CD4-positive, alpha-beta memory T cell (primary cell): ENCODE measurements at regions of chr14 and their contacts with region 1.

Region 1: DNA sequence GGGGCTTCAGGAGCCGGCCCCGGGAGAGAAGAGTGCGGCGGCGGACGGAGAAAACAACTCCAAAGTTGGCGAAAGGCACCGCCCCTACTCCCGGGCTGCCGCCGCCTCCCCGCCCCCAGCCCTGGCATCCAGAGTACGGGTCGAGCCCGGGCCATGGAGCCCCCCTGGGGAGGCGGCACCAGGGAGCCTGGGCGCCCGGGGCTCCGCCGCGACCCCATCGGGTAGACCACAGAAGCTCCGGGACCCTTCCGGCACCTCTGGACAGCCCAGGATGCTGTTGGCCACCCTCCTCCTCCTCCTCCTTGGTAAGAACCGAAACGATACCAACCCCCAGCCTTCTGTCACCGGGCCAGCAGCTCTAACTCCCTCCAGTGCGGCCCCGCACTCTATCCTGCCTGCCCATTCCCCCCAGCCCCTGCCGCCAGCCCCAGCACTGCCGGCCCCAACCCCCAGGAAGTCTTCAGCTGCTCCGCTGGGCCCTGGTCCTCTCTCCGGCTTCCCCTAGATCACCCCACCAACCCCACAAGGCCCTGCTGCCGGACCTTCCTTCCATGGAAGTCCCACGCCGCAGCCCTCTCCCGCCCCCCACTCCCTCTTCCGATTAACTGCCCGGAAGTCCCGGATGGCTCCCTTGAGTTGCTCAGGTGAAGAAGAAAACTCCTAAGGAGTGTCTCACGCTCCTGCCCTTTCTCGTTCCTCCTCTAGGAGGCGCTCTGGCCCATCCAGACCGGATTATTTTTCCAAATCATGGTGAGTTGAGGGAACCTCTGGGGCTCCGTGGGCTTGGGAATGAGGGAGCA is 693 bp downstream of the LRP10 start:
- DNase-seq: peak; percentile 66 to 78 (median 73)
- H3K4me3 ChIP-seq: peak overlapping the region; percentile 24 to 55
- H3K4me3 Mint-ChIP-seq: peak overlapping the region; percentile 88 to 98 (median 97)
- H3K27ac ChIP-seq: peak overlapping the region; percentile 79
- H3K27ac Mint-ChIP-seq: peak overlapping the region; percentile 72 to 100 (median 89)
- H3K4me1 ChIP-seq: peaks cover 48% of the 10 kb centered on the region
- H3K4me1 Mint-ChIP-seq: peaks cover 17 to 46% (median 33%) of the 10 kb centered on the region in 4 donors
- H3K27me3 ChIP-seq: no peaks in the 10 kb centered on the region
- H3K27me3 Mint-ChIP-seq: no peaks in the 10 kb centered on the region

Region 2: GRCh38 chr14:22766456-22767322 is 105.5 kb before region 1 on chr14 and contains the start of gene OXA1L:
- CTCF ChIA-PET with region 1: interaction called, 3 read pairs
- POLR2A ChIA-PET with region 1: interaction called, 10 read pairs
- intact Hi-C with region 1: no loop called
- DNase-seq: peak; percentile 95 to 98 (median 98)
- H3K4me3 ChIP-seq: peak within 1 kb of the TSS; percentile 62 to 88
- H3K4me3 Mint-ChIP-seq: peak within 1 kb of the TSS; percentile 85 to 96 (median 94)
- H3K27ac ChIP-seq: peak within 1 kb of the TSS; percentile 88
- H3K27ac Mint-ChIP-seq: peak within 1 kb of the TSS; percentile 86 to 100 (median 98)
- H3K4me1 ChIP-seq: peaks cover 24% of the 10 kb centered on the region
- H3K4me1 Mint-ChIP-seq: peaks cover 26 to 39% (median 34%) of the 10 kb centered on the region in 4 donors
- H3K27me3 ChIP-seq: no peaks in the 10 kb centered on the region
- H3K27me3 Mint-ChIP-seq: no peaks in the 10 kb centered on the region
- total RNA-seq, gene OXA1L: 129 to 137 TPM

Region 3: GRCh38 chr14:22811722-22812121 is 60.5 kb before region 1 on chr14:
- CTCF ChIA-PET with region 1: no interaction called
- POLR2A ChIA-PET with region 1: no interaction called
- intact Hi-C with region 1: no loop called
- DNase-seq: no peak
- H3K4me3 ChIP-seq: no peak overlapping the region
- H3K4me3 Mint-ChIP-seq: no peak overlapping the region
- H3K27ac ChIP-seq: no peak overlapping the region
- H3K27ac Mint-ChIP-seq: no peak overlapping the region
- H3K4me1 ChIP-seq: no peaks in the 10 kb centered on the region
- H3K4me1 Mint-ChIP-seq: peaks cover 0 to 12% (median 3%) of the 10 kb centered on the region in 4 donors
- H3K27me3 ChIP-seq: no peaks in the 10 kb centered on the region
- H3K27me3 Mint-ChIP-seq: peaks cover 1 to 3% of the 10 kb centered on the region in 2 donors

Region 4: DNA sequence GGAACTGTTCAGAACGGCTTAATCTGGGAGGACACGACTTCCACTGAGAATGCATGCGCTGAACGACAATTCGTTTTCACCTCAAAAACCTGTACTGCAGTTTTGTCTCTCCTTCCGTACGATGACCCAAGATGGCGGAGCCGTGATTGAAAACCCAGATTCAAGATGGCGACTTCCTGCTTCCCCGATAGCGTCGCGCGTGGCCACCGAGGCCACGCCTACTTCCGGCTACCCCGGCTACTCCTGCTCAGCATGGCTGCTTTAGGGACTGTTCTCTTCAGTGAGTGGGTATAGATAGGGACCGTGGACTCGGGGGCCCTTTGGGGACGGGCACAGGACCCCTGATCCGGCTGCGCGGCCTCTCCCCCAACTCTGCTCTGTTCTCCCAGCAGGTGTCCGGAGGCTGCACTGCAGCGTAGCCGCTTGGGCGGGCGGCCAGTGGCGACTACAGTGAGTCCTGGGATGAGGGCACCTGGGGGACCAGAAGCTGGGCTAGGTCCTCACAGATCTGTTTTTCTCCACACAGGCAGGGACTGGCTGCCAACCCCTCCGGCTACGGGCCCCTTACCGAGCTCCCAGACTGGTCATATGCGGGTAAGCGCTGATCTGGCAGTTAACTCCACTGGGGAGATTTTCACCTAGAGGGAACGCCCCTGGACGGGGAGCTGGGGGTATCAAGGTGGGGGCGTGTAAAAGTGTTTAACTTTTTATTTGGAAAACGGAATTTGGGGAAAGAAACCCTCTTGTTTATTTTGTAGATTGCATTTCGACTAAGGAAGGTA is 42.4 kb before region 1 on chr14 and contains the start of gene MRPL52:
- CTCF ChIA-PET with region 1: interaction called, 38 read pairs
- POLR2A ChIA-PET with region 1: interaction called, 19 read pairs
- intact Hi-C with region 1: loop called (anchors 1 kb)
- DNase-seq: peak; percentile 86 to 93 (median 88)
- H3K4me3 ChIP-seq: peak within 1 kb of the TSS; percentile 80 to 85
- H3K4me3 Mint-ChIP-seq: peak within 1 kb of the TSS; percentile 91 to 96 (median 92)
- H3K27ac ChIP-seq: peak within 1 kb of the TSS; percentile 85
- H3K27ac Mint-ChIP-seq: peak within 1 kb of the TSS; percentile 96 to 99 (median 98)
- H3K4me1 ChIP-seq: peaks cover 18% of the 10 kb centered on the region
- H3K4me1 Mint-ChIP-seq: peaks cover 17 to 32% (median 24%) of the 10 kb centered on the region in 4 donors
- H3K27me3 ChIP-seq: no peaks in the 10 kb centered on the region
- H3K27me3 Mint-ChIP-seq: peaks cover 0 to 1% of the 10 kb centered on the region in 2 donors
- total RNA-seq, gene MRPL52: 58.0 to 68.3 TPM

Region 5: GRCh38 chr14:22900081-22900799 is 28.0 kb after region 1 on chr14:
- CTCF ChIA-PET with region 1: interaction called, 123 read pairs
- POLR2A ChIA-PET with region 1: interaction called, 34 read pairs
- intact Hi-C with region 1: loop called (anchors 1 kb)
- DNase-seq: peak; percentile 66 to 72 (median 67)
- H3K4me3 ChIP-seq: no peak overlapping the region
- H3K4me3 Mint-ChIP-seq: no peak overlapping the region
- H3K27ac ChIP-seq: no peak overlapping the region
- H3K27ac Mint-ChIP-seq: peak overlapping the region; percentile 12 to 65 (median 54)
- H3K4me1 ChIP-seq: peaks cover 4% of the 10 kb centered on the region
- H3K4me1 Mint-ChIP-seq: peaks cover 5 to 15% (median 5%) of the 10 kb centered on the region in 4 donors
- H3K27me3 ChIP-seq: no peaks in the 10 kb centered on the region
- H3K27me3 Mint-ChIP-seq: no peaks in the 10 kb centered on the region

Region 6: DNA sequence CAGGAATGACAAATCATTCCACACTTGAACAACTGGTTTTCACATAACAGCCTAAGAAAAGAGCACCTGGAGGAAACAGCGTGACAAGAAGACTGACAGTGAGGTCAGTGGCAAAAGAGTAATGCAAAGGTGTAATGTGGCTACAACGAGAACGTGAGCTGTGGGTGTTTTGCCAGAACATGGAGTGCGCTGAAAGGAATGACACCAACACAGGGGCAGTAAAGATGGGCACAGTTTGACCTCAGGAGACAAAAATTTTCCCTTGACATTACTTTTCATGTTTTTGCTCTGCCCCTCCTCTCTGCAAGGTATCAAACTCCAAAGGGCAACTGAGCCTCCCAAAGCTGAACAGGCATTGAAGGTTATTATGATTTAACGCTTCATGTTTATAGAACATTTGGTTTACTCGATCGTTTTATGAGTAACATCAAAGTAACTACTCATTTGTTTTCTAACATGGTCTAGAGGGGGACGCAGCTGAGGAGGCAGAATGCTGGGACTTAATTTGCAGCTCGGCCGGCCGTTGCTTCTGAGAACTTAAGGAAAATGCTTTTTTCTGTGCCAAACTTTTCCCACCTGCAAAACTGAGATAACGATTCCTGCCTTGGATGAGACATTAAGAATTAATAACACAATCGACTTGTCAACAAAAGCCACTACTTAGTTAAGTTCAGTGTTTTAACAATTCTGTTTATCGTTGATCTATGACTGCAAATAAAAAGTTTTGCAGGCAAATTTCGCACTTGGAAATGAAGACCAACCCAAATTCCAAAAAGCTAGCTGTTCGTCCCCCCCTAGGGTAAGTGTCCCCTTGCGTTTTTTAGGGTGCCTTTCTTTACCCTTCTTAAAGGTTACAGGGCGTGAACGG is 83.7 kb after region 1 on chr14:
- CTCF ChIA-PET with region 1: interaction called, 3 read pairs
- POLR2A ChIA-PET with region 1: interaction called, 4 read pairs
- intact Hi-C with region 1: loop called (anchors 1 kb)
- DNase-seq: peak in 1 of 5 donors; percentile 11
- H3K4me3 ChIP-seq: peak overlapping the region; percentile 30 to 89
- H3K4me3 Mint-ChIP-seq: peak overlapping the region; percentile 91 to 94 (median 92)
- H3K27ac ChIP-seq: peak overlapping the region; percentile 79
- H3K27ac Mint-ChIP-seq: peak overlapping the region; percentile 92 to 95 (median 93)
- H3K4me1 ChIP-seq: peaks cover 16% of the 10 kb centered on the region
- H3K4me1 Mint-ChIP-seq: peaks cover 13 to 22% (median 16%) of the 10 kb centered on the region in 4 donors
- H3K27me3 ChIP-seq: no peaks in the 10 kb centered on the region
- H3K27me3 Mint-ChIP-seq: no peaks in the 10 kb centered on the region

Region 7: DNA sequence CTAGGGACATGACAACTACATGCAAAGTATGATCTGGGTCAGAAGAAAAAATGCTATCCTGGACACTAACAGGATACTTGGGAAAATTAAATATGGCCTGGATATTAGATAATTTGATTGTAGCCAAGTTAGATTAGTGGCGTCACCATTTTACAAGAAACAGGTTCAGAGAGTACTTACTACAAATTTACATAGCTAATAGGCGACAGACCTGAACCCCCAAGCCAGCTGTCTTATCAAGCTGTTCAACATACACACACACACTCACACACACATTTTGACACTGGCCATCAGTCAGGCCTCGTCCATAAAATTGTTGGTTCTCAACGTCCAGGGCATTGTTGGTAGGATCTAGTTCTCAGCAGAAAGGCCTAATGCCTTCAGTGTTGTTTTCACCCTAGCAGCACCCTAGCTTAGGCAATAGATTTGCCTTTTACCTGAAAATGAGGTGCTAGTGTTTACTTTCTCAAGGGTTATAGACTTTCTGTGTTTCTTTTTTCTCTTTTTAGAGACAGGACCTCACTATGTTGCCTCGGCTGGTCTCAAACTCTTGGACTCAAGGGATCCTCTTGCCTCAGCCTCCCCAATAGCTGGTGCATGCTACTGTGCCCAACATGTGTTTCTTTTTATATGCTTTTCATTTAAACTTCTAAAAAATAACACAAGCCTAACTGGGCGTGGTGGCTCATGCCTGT is 141.0 kb after region 1 on chr14:
- CTCF ChIA-PET with region 1: no interaction called
- POLR2A ChIA-PET with region 1: no interaction called
- intact Hi-C with region 1: no loop called
- DNase-seq: no peak
- H3K4me3 ChIP-seq: no peak overlapping the region
- H3K4me3 Mint-ChIP-seq: peak overlapping the region in 2 of 8 donors; percentile 13 to 52
- H3K27ac ChIP-seq: no peak overlapping the region
- H3K27ac Mint-ChIP-seq: peak overlapping the region in 2 of 7 donors; percentile 35 to 72
- H3K4me1 ChIP-seq: peaks cover 19% of the 10 kb centered on the region
- H3K4me1 Mint-ChIP-seq: peaks cover 11 to 34% (median 22%) of the 10 kb centered on the region in 4 donors
- H3K27me3 ChIP-seq: no peaks in the 10 kb centered on the region
- H3K27me3 Mint-ChIP-seq: no peaks in the 10 kb centered on the region